Activated CD4-positive, alpha-beta memory T cell treated with anti-CD3 and anti-CD28 coated beads for 36 hours (primary cell): ENCODE measurements at regions of chr5 and their contacts with region 1.

Region 1: DNA sequence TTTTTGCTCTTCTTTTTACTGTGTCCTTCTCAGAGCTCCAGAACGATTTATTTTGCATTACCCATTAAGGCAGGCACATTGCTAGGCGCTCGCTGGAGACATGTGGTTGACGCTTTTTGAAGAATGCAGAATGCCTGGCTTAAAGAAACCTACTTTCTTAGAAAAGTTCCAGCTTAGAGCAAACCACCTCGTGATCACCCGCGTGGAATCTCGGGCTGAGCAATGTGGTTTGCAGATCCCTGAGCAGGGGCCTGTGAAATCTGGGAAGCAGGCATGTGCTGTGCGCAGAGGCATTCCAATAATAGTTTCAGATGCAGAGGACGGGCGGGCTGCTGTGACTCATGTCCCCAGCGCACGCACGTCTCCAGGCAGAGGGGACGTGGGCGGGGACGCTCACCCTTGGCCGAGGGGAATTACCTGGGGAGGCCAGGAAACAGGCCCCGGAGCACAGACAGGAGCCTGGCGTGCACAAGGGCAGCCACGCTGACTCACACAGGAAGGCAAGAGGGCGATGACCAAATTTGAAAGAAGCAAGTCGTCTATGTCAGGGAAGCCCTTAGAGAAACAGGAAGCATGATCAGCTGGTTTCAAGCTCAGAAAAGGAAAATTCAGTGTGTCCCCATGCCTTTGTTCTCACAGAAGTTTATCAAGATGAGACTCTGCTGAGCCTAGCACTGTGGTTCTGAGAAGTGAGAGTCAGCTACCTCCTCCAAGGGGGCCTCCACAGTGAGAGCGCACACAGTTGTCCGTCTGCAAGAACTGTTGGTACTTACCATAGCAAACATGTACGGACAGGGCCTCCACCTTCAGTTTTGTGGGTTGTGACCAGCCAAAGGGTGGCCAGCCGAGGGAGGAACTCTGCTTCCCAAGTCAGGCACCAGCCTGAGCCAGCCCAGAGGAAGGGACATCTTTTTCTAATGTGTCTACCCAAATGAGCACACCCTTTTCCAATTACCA is 218.6 kb downstream of the PIK3R1 start:
- DNase-seq: peak; percentile 98
- H3K4me3 Mint-ChIP-seq: peak overlapping the region; percentile 42
- H3K27ac Mint-ChIP-seq: peak overlapping the region; percentile 77
- H3K4me1 Mint-ChIP-seq: peaks cover 53% of the 10 kb centered on the region
- H3K27me3 Mint-ChIP-seq: peaks cover 2% of the 10 kb centered on the region

Region 2: GRCh38 chr5:68215208-68215897 is 218.8 kb before region 1 on chr5 and contains the start of gene PIK3R1:
- CTCF ChIA-PET with region 1: no interaction called
- POLR2A ChIA-PET with region 1: interaction called, 4 read pairs
- intact Hi-C with region 1: loop called (anchors 2 kb)
- DNase-seq: peak; percentile 95
- H3K4me3 Mint-ChIP-seq: peak within 1 kb of the TSS; percentile 91
- H3K27ac Mint-ChIP-seq: peak within 1 kb of the TSS; percentile 97
- H3K4me1 Mint-ChIP-seq: peaks cover 39% of the 10 kb centered on the region
- H3K27me3 Mint-ChIP-seq: no peaks in the 10 kb centered on the region
- total RNA-seq, gene PIK3R1: 35.3 to 40.9 TPM

Region 3: DNA sequence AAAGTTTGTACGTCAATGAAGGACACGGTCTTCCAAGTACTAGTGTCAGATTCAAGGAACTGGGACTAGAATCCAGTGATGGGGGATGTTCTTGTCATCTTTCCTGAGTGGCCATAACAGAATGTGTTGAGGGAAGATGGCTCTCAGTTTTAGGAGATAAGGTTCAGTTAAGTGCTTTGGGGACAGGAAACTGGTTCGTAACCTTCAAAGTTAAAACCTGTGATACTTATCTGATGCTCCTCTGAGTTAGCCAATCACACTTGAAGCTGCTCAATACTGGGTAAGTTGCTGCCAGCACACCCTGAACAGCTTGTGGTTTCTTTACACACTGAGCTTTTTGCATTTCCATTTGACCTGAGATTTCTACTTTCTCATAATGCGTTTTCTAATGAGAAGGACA is 154.2 kb before region 1 on chr5:
- CTCF ChIA-PET with region 1: interaction called, 5 read pairs
- POLR2A ChIA-PET with region 1: interaction called, 3 read pairs
- intact Hi-C with region 1: loop called (anchors 1 kb)
- DNase-seq: peak; percentile 60
- H3K4me3 Mint-ChIP-seq: peak overlapping the region; percentile 76
- H3K27ac Mint-ChIP-seq: peak overlapping the region; percentile 99
- H3K4me1 Mint-ChIP-seq: peaks cover 94% of the 10 kb centered on the region
- H3K27me3 Mint-ChIP-seq: no peaks in the 10 kb centered on the region

Region 4: DNA sequence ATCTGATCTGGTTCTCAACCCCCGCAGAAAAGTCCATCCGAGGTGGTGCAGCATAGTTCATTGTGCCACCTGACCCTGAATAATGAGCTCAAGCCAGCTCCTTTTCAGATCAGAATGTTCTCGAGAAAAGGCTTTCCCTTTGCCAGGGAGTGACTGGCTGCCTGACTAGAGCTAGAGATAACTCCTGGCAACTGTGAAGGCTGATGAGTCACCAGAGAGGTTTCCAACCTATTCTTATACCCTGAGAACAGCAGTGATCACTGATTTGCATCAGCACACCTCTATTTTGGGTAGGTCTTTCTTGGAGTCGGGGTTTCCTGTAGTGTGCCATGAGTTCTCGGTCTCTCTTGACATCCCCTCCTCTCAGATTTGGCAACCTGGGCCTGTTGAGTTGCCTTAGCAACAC is 90.8 kb before region 1 on chr5:
- CTCF ChIA-PET with region 1: no interaction called
- POLR2A ChIA-PET with region 1: no interaction called
- intact Hi-C with region 1: loop called (anchors 2 kb)
- DNase-seq: peak; percentile 51
- H3K4me3 Mint-ChIP-seq: no peak overlapping the region
- H3K27ac Mint-ChIP-seq: no peak overlapping the region
- H3K4me1 Mint-ChIP-seq: peaks cover 27% of the 10 kb centered on the region
- H3K27me3 Mint-ChIP-seq: no peaks in the 10 kb centered on the region

Region 5: GRCh38 chr5:68379275-68380036 is 54.7 kb before region 1 on chr5:
- CTCF ChIA-PET with region 1: no interaction called
- POLR2A ChIA-PET with region 1: no interaction called
- intact Hi-C with region 1: loop called (anchors 2 kb)
- DNase-seq: no peak
- H3K4me3 Mint-ChIP-seq: no peak overlapping the region
- H3K27ac Mint-ChIP-seq: no peak overlapping the region
- H3K4me1 Mint-ChIP-seq: peaks cover 56% of the 10 kb centered on the region
- H3K27me3 Mint-ChIP-seq: no peaks in the 10 kb centered on the region

Region 6: DNA sequence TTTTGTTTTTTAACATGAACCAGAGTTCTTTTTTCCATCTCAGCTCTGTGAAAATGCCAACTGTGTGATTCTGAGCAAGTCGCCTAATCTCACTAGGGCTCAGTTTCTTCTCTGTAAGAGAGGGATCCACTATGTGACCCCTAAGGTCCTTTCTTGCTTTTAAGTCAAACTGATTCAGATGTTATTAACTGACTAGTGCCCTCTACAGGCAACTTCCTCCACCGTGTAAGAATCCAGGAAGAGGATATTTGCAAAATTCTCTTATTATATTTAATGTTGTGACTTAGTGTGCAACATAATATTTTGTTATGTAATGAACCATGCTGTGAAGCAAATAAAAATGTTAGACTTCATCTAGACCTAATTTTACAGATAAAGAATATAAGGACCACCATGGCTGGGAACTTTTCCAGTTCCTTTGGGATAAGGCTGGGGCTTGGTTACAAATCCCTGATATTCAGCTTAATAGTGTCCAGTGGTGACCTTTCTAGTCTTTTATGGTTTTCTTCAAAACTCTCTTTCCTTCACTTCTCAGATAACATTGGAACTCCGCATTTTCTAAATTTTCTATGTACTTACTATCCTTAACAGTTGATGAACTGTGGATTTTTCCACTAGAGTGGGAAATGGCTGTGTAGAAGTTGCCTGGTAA is 26.1 kb after region 1 on chr5:
- CTCF ChIA-PET with region 1: interaction called, 6 read pairs
- POLR2A ChIA-PET with region 1: interaction called, 6 read pairs
- intact Hi-C with region 1: loop called (anchors 1 kb)
- DNase-seq: peak; percentile 32
- H3K4me3 Mint-ChIP-seq: no peak overlapping the region
- H3K27ac Mint-ChIP-seq: no peak overlapping the region
- H3K4me1 Mint-ChIP-seq: peaks cover 23% of the 10 kb centered on the region
- H3K27me3 Mint-ChIP-seq: no peaks in the 10 kb centered on the region

Region 7: GRCh38 chr5:68519143-68519542 is 84.9 kb after region 1 on chr5:
- CTCF ChIA-PET with region 1: no interaction called
- POLR2A ChIA-PET with region 1: no interaction called
- intact Hi-C with region 1: no loop called
- DNase-seq: no peak
- H3K4me3 Mint-ChIP-seq: no peak overlapping the region
- H3K27ac Mint-ChIP-seq: no peak overlapping the region
- H3K4me1 Mint-ChIP-seq: no peaks in the 10 kb centered on the region
- H3K27me3 Mint-ChIP-seq: no peaks in the 10 kb centered on the region

Region 8: DNA sequence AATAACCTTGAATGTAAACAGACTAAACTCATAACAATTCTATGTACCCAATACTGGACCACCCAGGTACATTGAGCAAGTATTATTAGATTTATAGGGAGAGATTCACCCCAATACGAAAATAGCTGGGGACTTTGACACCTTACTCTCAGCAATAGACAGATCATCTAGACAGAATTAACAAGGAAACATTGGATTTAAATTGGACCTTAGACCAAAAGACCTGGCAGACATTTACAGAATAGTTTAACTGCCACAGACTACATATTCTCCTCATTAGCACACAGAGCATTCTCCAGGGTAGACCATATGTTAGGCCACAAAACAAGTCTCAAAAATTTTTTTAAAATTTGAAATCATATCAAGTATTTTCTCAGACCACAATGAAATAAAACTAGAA is 178.8 kb after region 1 on chr5:
- CTCF ChIA-PET with region 1: no interaction called
- POLR2A ChIA-PET with region 1: no interaction called
- intact Hi-C with region 1: no loop called
- DNase-seq: no peak
- H3K4me3 Mint-ChIP-seq: no peak overlapping the region
- H3K27ac Mint-ChIP-seq: no peak overlapping the region
- H3K4me1 Mint-ChIP-seq: no peaks in the 10 kb centered on the region
- H3K27me3 Mint-ChIP-seq: peaks cover 2% of the 10 kb centered on the region